Activated CD4-positive, alpha-beta T cell treated with anti-CD3 and anti-CD28 coated beads, Interleukin-2, amount 10 ng/mL, durations not matched to agents 24 days and 14 days (primary cell): ENCODE measurements at regions of chr4 and their contacts with region 1.

Region 1: GRCh38 chr4:122732329-122733026 is at the start of gene BBS12:
- DNase-seq: peak; percentile 100
- H3K4me3 Mint-ChIP-seq: peak within 1 kb of the TSS; percentile 94
- H3K27ac Mint-ChIP-seq: peak within 1 kb of the TSS; percentile 96
- H3K4me1 Mint-ChIP-seq: peaks cover 25% of the 10 kb centered on the region
- H3K27me3 Mint-ChIP-seq: no peaks in the 10 kb centered on the region
- total RNA-seq, gene BBS12: 3.8 and 4.7 TPM in 2 replicates

Region 2: GRCh38 chr4:122747883-122748282 is 15.4 kb after region 1 on chr4:
- intact Hi-C with region 1: loop called (anchors 1 kb)
- DNase-seq: no peak
- H3K4me3 Mint-ChIP-seq: no peak overlapping the region
- H3K27ac Mint-ChIP-seq: no peak overlapping the region
- H3K4me1 Mint-ChIP-seq: peaks cover 18% of the 10 kb centered on the region
- H3K27me3 Mint-ChIP-seq: peaks cover 18% of the 10 kb centered on the region

Region 3: DNA sequence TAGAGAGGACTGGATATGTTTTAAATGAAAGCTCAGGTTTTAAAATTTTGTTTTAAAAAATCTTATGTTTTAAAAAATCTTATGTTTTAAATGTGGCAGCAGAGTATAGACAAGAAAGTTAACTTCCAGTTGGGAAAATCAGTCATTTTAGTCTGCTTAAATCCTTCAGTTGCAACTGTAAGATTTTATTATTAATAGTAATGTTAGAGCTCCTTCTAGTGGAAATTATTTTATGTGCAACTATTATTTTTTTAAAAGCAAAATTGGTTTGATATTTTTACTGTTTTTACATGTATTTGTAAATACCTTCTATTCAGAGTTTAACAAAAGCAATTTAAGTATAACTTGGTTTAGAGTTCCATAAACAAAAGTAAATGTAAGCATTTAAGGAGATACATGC is 198.4 kb after region 1 on chr4:
- intact Hi-C with region 1: loop called (anchors 1 kb)
- DNase-seq: no peak
- H3K4me3 Mint-ChIP-seq: no peak overlapping the region
- H3K27ac Mint-ChIP-seq: no peak overlapping the region
- H3K4me1 Mint-ChIP-seq: peaks cover 29% of the 10 kb centered on the region
- H3K27me3 Mint-ChIP-seq: no peaks in the 10 kb centered on the region